ENCODE measurements at regions of chr1 and their contacts with region 1.

Region 1: GRCh38 chr1:174022080-174022975 is at the start of gene RC3H1:
- DNase-seq: peak; percentile 91
- H3K4me3 ChIP-seq: peak within 1 kb of the TSS; percentile 82 to 91 (median 87)
- H3K27ac ChIP-seq: peak within 1 kb of the TSS; percentile 88
- H3K4me1 ChIP-seq: peaks cover 22% of the 10 kb centered on the region
- H3K27me3 ChIP-seq: no peaks in the 10 kb centered on the region
- CTCF ChIP-seq: no peak
- POLR2A ChIP-seq: peak; percentile 74
- total RNA-seq, gene RC3H1: 30.0 and 41.4 TPM in 2 replicates

Region 2: DNA sequence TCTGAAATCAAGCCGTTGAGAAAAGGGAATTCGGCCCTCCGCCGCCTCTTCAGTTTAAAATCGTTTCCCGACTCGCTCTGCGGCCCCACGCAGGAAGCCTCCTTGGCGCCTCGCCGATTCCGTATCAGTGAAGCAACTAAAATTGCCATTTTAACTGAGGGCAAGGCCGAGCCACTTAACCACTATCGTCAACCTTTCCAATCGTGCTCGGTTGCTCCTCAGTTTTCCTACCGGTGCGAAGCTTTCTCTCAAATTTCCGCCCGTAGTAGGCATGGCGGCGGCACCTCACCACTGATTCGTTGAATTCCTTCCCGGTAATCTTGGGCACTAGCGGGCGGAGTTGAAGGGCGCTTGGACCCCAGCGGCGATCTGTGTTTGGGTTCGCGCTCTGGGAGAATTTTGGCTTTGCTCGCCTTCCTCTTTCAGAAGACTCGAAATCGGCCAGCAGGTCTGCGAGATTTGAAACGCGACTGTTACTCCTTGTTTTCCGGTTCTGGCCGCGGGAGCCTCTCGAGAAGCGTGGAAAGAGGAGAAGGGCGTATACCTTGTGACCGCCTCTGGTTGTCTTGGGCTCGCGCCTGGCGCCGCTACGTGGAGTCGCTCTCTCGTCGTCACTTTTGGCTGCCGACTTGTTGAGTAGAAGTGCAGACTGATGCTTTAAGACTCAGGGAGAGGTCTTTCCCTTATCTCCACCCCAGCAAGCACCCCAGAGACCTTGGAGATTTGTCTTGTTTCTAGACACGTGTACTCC is 197.8 kb before region 1 on chr1 and contains the starts of genes CENPL and DARS2:
- CTCF ChIA-PET with region 1: no interaction called
- POLR2A ChIA-PET with region 1: no interaction called
- dilution Hi-C with region 1: no loop called
- intact Hi-C with region 1: no loop called
- DNase-seq: peak; percentile 98
- H3K4me3 ChIP-seq: peak within 1 kb of the TSS; percentile 87 to 92 (median 87)
- H3K27ac ChIP-seq: peak within 1 kb of the TSS; percentile 92
- H3K4me1 ChIP-seq: peaks cover 15% of the 10 kb centered on the region
- H3K27me3 ChIP-seq: no peaks in the 10 kb centered on the region
- CTCF ChIP-seq: no peak
- POLR2A ChIP-seq: peak; percentile 85
- total RNA-seq, gene CENPL: 19.0 and 20.8 TPM in 2 replicates
- total RNA-seq, gene DARS2: 30.5 and 33.6 TPM in 2 replicates

Region 3: DNA sequence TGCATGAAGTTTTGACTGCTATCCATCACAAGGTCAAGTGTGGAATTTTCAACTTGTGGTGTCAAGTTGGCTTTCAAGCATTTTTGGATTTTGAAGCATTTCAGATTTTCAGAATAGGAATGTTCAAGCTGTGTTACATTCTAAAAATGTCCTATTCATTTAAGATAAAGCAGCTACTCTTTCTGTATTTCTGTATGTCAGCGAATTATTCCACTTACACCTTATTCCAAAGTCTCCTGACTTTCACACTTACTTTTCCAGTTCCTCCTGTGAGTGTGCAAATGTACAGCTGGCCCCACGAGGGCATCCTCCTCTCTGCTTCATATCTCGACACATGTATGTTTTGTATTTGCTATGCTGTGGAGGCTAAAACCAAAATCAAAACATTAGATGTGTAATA is 52.1 kb before region 1 on chr1:
- CTCF ChIA-PET with region 1: no interaction called
- POLR2A ChIA-PET with region 1: no interaction called
- dilution Hi-C with region 1: no loop called
- intact Hi-C with region 1: no loop called
- DNase-seq: no peak
- H3K4me3 ChIP-seq: no peak overlapping the region
- H3K27ac ChIP-seq: no peak overlapping the region
- H3K4me1 ChIP-seq: no peaks in the 10 kb centered on the region
- H3K27me3 ChIP-seq: no peaks in the 10 kb centered on the region
- CTCF ChIP-seq: no peak
- POLR2A ChIP-seq: no peak

Region 4: DNA sequence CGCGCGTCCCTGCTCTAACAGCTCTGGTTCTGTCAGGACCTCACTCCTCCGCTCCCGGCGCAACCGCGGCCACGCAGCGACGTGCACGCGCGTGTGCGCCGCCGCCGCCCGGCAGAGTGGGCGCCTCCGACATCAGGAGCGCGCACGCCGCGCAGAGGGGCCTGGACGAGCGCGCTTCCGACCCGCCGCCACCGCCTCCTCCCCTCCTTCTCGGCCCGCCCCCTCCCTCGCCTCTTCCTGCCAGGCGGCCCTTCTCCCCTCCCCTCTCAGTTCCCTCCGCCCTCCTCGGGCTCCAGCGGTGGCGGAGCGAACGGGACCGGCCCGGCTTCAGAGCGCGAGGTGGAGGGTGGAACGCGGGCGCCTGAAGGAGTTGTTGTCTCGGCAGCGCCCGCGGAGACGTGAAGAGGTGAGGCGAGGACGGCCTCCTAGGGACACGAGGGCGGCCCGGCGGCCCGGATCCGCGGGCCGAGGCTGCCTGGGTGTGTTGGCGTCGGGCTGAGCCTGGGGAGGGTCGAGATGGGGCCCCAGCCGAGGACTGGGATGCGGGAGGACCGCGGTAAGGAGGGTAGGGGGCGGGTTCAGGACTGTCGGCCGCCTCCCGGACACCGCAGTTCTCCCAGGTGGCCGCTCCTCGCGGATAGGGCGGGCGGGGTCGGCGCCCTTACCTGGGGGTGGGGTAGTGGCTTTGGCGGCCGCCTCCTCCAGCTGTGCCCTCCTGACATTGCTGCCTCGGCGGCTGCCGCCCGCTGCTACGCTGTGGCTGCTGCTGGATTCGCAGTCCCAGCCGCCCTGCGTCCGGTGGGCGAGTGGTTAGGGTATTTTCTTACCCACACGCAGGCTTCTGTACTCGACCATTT is 137.2 kb after region 1 on chr1 and contains the start of gene RABGAP1L:
- CTCF ChIA-PET with region 1: no interaction called
- POLR2A ChIA-PET with region 1: no interaction called
- dilution Hi-C with region 1: no loop called
- intact Hi-C with region 1: loop called (anchors 1 kb)
- DNase-seq: peak; percentile 96
- H3K4me3 ChIP-seq: peak within 1 kb of the TSS; percentile 77 to 91 (median 81)
- H3K27ac ChIP-seq: no peak within 1 kb of the TSS
- H3K4me1 ChIP-seq: peaks cover 8% of the 10 kb centered on the region
- H3K27me3 ChIP-seq: no peaks in the 10 kb centered on the region
- CTCF ChIP-seq: no peak
- POLR2A ChIP-seq: no peak
- total RNA-seq, gene RABGAP1L: 20.7 and 22.2 TPM in 2 replicates

Region 5: DNA sequence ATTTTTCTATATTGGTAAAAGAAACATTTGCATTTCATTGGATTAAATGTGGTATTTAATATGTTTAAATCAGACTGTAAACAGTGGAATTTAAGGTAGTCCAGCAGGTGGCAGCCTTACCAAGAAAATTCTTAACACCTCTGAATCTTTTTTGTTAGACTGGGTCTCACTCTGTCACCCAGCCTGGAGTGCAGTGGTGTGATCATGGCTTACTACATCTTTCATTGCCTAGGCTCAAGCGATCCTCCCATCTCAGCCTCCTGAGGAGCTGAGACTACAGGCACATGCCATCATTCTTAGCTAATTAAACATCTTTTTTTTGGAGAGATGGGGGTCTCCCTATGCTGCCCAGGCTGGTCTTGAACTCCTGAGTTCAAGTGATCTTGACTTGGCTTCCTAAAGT is 235.8 kb after region 1 on chr1:
- CTCF ChIA-PET with region 1: no interaction called
- POLR2A ChIA-PET with region 1: no interaction called
- dilution Hi-C with region 1: no loop called
- intact Hi-C with region 1: no loop called
- DNase-seq: peak; percentile 53
- H3K4me3 ChIP-seq: no peak overlapping the region
- H3K27ac ChIP-seq: no peak overlapping the region
- H3K4me1 ChIP-seq: no peaks in the 10 kb centered on the region
- H3K27me3 ChIP-seq: no peaks in the 10 kb centered on the region
- CTCF ChIP-seq: peak; percentile 35 to 37
- POLR2A ChIP-seq: no peak

Measured in endothelial cell of umbilical vein (primary cell).